Activated CD4-positive, alpha-beta T cell treated with anti-CD3 and anti-CD28 coated beads for 36 hours (primary cell): ENCODE measurements at regions of chr3 and their contacts with region 1.

Region 1: DNA sequence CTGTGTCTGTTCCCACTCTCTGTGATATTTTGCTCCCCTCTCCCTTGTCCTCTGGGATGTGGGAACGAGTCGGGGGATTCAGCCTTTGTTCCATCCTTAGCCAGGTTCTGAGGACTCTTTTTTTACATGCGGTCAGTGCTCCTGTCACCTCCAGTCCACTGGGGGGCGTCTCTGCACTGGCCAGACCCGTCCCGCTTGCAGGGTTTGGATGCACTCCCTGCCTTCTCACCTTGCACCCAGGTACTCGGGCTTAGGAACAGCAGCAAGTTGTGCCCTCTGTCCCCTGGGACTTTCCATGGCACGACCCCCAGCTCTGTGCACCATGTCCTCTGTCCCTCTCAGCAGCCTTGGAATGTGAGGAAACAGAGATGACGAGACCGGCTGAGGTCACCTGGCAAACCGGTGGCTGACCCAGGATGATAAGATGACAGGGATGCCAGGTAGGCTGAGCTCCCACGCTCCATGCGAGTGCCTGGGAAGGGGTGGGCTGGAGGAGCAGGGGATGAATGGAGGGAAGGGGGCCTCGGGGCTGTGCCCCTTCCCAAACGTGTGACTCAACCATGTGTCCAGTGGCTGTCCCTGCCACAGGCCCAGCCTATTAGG is 27.3 kb upstream of the FGD5 start:
- DNase-seq: peak; percentile 78
- ATAC-seq: peak; percentile 78
- H3K4me3 Mint-ChIP-seq: no peak overlapping the region
- H3K27ac Mint-ChIP-seq: no peak overlapping the region
- H3K4me1 Mint-ChIP-seq: no peaks in the 10 kb centered on the region
- H3K27me3 Mint-ChIP-seq: peaks cover 8% of the 10 kb centered on the region

Region 2: DNA sequence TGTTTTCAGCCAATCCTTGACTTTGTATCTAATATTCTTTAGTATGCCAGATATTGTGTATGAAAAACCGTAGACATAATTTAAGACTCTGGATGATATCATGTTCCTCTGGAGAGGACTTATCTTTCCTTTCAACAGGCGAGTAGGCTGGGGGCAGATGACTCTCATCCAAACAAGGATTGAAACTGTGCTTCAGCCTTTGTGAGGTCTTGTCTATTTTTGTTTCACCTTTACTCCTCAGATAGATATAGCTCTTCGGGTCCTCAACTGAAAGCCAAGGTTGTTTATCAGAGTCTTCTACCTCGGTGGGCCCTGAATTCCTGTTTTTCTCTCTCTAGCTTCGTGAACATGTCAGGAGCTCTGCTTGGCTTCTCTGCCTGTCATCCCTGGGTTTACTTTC is 50.5 kb before region 1 on chr3:
- CTCF ChIA-PET with region 1: no interaction called
- POLR2A ChIA-PET with region 1: no interaction called
- intact Hi-C with region 1: no loop called
- DNase-seq: no peak
- ATAC-seq: no peak
- H3K4me3 Mint-ChIP-seq: no peak overlapping the region
- H3K27ac Mint-ChIP-seq: no peak overlapping the region
- H3K4me1 Mint-ChIP-seq: no peaks in the 10 kb centered on the region
- H3K27me3 Mint-ChIP-seq: peaks cover 20% of the 10 kb centered on the region

Region 3: GRCh38 chr3:14915636-14916222 is 124.3 kb after region 1 on chr3:
- CTCF ChIA-PET with region 1: interaction called, 14 read pairs
- POLR2A ChIA-PET with region 1: no interaction called
- intact Hi-C with region 1: loop called in 1 of 2 experiments (anchors 1 kb)
- DNase-seq: peak; percentile 28
- ATAC-seq: peak; percentile 39
- H3K4me3 Mint-ChIP-seq: no peak overlapping the region
- H3K27ac Mint-ChIP-seq: no peak overlapping the region
- H3K4me1 Mint-ChIP-seq: no peaks in the 10 kb centered on the region
- H3K27me3 Mint-ChIP-seq: peaks cover 2% of the 10 kb centered on the region

Region 4: DNA sequence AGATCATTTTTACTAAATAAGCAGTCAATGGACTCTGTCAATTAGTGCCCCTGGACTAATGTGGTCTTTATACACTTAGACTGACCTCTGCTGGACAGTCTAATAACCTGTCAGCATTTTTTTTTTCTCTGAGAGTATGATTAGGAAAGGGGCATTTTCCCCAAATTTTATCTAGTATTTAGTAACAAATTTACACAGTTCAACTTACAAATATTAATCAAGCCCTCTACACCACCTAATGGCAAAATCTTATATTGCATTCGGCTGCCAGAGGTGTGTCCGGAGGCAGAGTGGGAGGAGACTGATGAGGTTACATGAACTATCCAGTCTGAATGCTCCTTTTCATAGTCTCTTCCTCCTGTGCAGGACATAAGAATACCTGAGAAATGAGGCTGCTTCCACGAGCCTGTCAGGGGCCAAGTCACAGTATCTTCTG is 766.1 kb after region 1 on chr3:
- CTCF ChIA-PET with region 1: no interaction called
- POLR2A ChIA-PET with region 1: no interaction called
- intact Hi-C with region 1: no loop called
- DNase-seq: peak; percentile 75
- ATAC-seq: peak; percentile 87
- H3K4me3 Mint-ChIP-seq: no peak overlapping the region
- H3K27ac Mint-ChIP-seq: no peak overlapping the region
- H3K4me1 Mint-ChIP-seq: peaks cover 10% of the 10 kb centered on the region
- H3K27me3 Mint-ChIP-seq: no peaks in the 10 kb centered on the region